ENCODE measurements at regions of chr6 and their contacts with region 1.

Region 1: DNA sequence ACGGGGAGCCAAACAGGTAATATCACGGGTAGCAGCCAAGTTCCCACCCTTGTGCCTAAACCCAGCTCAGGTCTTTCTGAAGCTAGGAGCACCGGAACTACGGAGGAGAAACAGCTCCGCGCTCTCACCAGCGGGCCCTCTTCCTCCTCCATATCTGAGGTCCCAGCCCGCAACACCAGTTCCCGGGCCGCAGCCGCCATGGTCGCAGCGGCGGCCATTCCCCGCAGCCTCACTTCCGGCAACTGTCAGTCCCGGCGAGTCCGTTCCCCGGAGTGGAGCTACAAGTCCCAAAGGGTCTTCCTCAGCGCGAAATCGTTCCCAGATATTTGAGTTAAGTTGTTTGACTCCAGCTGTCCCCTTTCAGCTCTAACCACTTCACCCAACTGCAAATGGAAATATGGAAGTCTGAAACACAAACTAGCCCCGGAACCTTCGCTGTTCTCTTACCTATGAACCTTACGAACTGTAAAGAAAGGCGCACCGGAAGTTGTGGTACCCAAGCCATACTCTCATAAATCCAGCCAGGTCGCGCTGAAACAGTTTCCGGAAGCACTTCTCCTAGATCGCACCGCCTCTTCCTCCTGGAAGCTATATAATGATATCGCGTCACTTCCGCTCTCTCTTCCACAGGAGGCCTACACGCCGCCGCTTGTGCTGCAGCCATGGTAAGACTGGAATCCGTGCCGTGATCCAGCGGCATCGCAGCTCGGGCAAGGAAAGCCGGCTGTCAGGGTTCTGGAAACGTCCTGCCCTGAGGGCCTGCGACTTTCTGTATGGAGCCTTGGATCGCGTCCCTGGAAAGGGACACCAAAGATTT is at the starts of genes RPS18 and VPS52:
- DNase-seq: peak; percentile 78 to 100 (median 94)
- ATAC-seq: peak; percentile 86 to 88
- H3K4me3 Mint-ChIP-seq: peak within 1 kb of the TSS; percentile 92 to 99 (median 96)
- H3K27ac Mint-ChIP-seq: peak within 1 kb of the TSS; percentile 99 to 100 (median 99)
- H3K4me1 Mint-ChIP-seq: peaks cover 34 to 71% (median 70%) of the 10 kb centered on the region in 4 donors
- H3K27me3 Mint-ChIP-seq: no peaks in the 10 kb centered on the region
- polyA plus RNA-seq, gene RPS18: 9,896 to 11,320 (median 11,293) TPM
- polyA plus RNA-seq, gene VPS52: 9.3 to 19.3 (median 15.2) TPM

Region 2: DNA sequence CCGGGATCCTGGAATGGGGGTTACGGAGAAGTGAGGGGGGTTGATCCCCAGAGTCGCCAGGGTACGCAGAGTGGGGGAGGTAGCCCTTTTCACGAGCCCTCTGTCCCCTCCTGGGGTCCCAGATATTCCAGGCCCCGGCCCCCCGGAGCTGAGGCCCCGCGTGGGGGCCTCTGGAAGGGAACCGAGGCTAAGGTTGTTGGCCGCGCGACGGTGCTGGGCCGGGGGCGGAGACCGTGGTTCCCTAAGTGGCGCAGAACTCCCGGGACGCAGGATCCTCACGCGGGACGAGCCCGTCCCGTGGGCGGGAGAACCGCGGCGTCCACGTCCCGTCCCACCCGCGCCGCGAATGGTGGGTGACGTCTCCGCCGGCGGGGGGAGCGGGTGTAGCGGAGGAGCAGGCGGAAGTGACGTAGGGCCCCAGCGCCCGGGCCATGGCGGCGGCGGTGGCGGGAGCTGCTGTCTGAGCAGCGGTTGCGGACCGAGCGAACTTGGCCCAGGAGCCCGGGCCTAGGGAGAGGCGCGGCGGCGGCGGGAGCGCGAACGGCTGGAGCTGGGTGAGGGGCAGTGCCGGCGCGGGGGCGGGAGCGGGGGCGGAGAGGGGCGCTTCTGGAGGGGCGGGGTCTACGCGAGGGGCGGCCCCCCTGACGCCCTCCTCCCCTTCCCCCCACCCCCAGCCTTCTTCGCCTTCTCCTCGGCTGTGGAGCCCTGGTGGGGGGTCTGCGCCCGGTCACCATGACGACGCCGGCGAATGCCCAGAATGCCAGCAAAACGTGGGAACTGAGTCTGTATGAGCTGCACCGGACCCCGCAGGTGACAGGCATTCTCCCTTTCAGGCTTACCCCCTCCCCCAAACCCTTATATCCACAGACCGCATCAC is 63.3 kb before region 1 on chr6 and contains the start of gene RING1:
- POLR2A ChIA-PET with region 1: interaction called, 10 read pairs
- DNase-seq: peak; percentile 79 to 91 (median 87)
- ATAC-seq: peak; percentile 58 to 69
- H3K4me3 Mint-ChIP-seq: peak within 1 kb of the TSS; percentile 84 to 99 (median 94)
- H3K27ac Mint-ChIP-seq: peak within 1 kb of the TSS; percentile 88 to 98 (median 96)
- H3K4me1 Mint-ChIP-seq: peaks cover 38 to 66% (median 61%) of the 10 kb centered on the region in 4 donors
- H3K27me3 Mint-ChIP-seq: peaks cover 0 to 3% (median 0%) of the 10 kb centered on the region in 5 donors
- polyA plus RNA-seq, gene RING1: 12.1 to 12.5 (median 12.4) TPM

Region 3: GRCh38 chr6:33288921-33289748 is 17.5 kb after region 1 on chr6 and contains the starts of genes PFDN6 and WDR46:
- POLR2A ChIA-PET with region 1: interaction called, 128 read pairs
- DNase-seq: peak; percentile 53 to 91 (median 81)
- ATAC-seq: peak; percentile 96 to 97
- H3K4me3 Mint-ChIP-seq: peak within 1 kb of the TSS; percentile 87 to 100 (median 99)
- H3K27ac Mint-ChIP-seq: peak within 1 kb of the TSS; percentile 84 to 97 (median 94)
- H3K4me1 Mint-ChIP-seq: peaks cover 22 to 51% (median 48%) of the 10 kb centered on the region in 4 donors
- H3K27me3 Mint-ChIP-seq: no peaks in the 10 kb centered on the region
- polyA plus RNA-seq, gene PFDN6: 33.4 to 38.2 (median 35.5) TPM
- polyA plus RNA-seq, gene WDR46: 71.3 to 83.7 (median 74.1) TPM

Region 4: GRCh38 chr6:33299237-33299944 is 27.7 kb after region 1 on chr6:
- POLR2A ChIA-PET with region 1: interaction called, 106 read pairs
- DNase-seq: peak; percentile 86 to 95 (median 92)
- ATAC-seq: peak; percentile 82 to 88
- H3K4me3 Mint-ChIP-seq: peak overlapping the region; percentile 94 to 100 (median 98)
- H3K27ac Mint-ChIP-seq: peak overlapping the region; percentile 94 to 100 (median 99)
- H3K4me1 Mint-ChIP-seq: peaks cover 20 to 49% (median 43%) of the 10 kb centered on the region in 4 donors
- H3K27me3 Mint-ChIP-seq: peaks cover 0 to 2% (median 0%) of the 10 kb centered on the region in 5 donors

Region 5: GRCh38 chr6:33317669-33318425 is 46.2 kb after region 1 on chr6 and contains the start of gene ZBTB22:
- POLR2A ChIA-PET with region 1: interaction called, 30 read pairs
- DNase-seq: peak; percentile 89 to 98 (median 94)
- ATAC-seq: peak; percentile 59 to 62
- H3K4me3 Mint-ChIP-seq: peak within 1 kb of the TSS in 9 of 10 donors; percentile 96 to 100 (median 99)
- H3K27ac Mint-ChIP-seq: peak within 1 kb of the TSS; percentile 95 to 100 (median 98)
- H3K4me1 Mint-ChIP-seq: peaks cover 36 to 87% (median 79%) of the 10 kb centered on the region in 4 donors
- H3K27me3 Mint-ChIP-seq: no peaks in the 10 kb centered on the region
- polyA plus RNA-seq, gene ZBTB22: 10.4 to 13.4 (median 10.7) TPM

Region 6: DNA sequence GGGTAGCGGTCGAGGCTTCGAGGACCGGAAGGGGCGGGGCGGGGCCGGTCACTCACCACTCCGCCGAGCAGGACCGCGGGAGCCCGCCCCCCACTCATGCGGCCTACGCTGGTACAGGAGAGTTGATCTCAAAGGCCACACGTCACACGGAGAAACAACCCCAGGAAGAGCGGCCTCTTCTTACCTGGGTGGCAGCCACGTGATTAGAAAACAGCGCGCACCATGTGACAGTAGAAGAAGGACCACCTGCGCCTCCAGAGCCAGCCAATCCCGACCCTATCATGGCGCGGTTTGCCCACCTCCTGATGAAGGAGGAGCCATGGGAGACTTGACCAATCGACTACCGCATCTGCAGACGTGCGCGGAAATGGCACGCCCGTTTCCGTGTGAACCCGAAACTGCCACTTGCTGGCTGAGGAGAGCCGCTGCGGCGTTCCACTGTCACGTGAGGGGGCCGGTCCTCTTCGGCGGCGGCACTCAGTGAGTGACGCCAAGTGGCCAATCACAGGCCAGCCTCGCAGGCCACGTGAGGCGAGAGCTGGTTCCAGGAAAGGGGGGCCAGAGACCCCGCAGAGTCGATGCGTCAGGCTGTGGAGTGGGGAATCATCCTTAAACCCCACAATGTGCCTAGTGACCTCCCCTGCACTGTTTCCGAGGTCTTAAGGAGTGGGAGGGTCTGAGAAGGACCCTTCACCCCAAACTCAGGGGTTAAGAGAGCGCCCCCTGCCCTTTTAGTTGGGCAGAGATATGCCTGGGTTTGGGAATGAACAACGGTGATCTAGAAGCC is 146.4 kb after region 1 on chr6 and contains the start of gene CUTA:
- POLR2A ChIA-PET with region 1: interaction called, 16 read pairs
- DNase-seq: peak; percentile 93 to 100 (median 99)
- ATAC-seq: peak; percentile 90
- H3K4me3 Mint-ChIP-seq: peak within 1 kb of the TSS; percentile 90 to 95 (median 92)
- H3K27ac Mint-ChIP-seq: peak within 1 kb of the TSS; percentile 98 to 100 (median 99)
- H3K4me1 Mint-ChIP-seq: peaks cover 49 to 94% (median 80%) of the 10 kb centered on the region in 4 donors
- H3K27me3 Mint-ChIP-seq: no peaks in the 10 kb centered on the region
- polyA plus RNA-seq, gene CUTA: 338 to 441 (median 385) TPM

Region 7: DNA sequence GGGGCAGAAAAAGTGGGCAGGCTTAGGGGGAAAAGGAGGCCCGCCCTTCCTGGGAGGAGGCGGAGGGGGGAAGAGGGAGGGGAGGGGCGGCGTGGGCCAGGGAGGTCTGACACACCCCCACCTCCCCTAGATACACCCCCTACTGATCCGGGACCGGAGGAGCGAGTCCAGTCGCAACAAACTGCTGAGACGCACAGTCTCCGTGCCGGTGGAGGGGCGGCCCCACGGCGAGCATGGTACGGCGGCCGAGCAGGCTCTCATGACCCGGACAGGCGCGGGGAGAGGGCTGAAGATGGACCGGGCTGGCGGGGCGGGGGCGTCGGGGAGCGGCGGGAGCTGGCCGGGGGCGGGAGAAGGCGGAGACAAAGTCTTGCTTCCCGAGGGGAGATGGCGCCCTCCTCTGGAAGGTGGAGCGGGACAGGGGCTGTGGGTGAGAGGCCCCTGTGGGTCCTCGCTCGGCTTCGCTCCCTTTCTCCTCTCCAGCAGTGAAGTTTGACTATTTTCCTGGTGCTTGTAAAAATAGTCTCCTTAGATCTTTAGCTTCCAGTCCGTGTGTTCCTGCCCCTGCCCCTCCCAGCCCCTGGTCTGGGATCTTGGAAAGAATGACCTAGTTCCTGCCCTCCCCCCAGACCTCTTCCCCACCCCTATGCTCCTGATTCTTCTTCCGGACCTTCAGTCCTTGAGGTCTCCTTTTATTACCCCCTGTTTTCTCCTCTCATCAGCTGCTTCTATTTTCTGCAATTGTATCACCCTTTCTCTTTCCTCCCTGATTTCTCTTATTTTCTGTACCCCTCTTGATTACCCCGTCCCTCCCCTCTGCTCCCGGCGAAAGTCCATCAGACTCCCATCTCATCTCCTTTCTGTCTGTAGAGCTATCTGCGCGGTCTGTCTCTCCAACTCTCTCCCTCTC is 154.3 kb after region 1 on chr6:
- POLR2A ChIA-PET with region 1: interaction called, 13 read pairs
- DNase-seq: peak; percentile 70 to 94 (median 80)
- ATAC-seq: peak; percentile 54 to 57
- H3K4me3 Mint-ChIP-seq: peak overlapping the region; percentile 87 to 97 (median 91)
- H3K27ac Mint-ChIP-seq: peak overlapping the region; percentile 93 to 99 (median 99)
- H3K4me1 Mint-ChIP-seq: peaks cover 61 to 90% (median 79%) of the 10 kb centered on the region in 4 donors
- H3K27me3 Mint-ChIP-seq: no peaks in the 10 kb centered on the region

Region 8: GRCh38 chr6:33654831-33655554 is 383.3 kb after region 1 on chr6:
- POLR2A ChIA-PET with region 1: no interaction called
- DNase-seq: no peak
- ATAC-seq: no peak
- H3K4me3 Mint-ChIP-seq: no peak overlapping the region
- H3K27ac Mint-ChIP-seq: peak overlapping the region in 2 of 10 donors; percentile 35 to 71
- H3K4me1 Mint-ChIP-seq: peaks cover 3 to 6% (median 4%) of the 10 kb centered on the region in 4 donors
- H3K27me3 Mint-ChIP-seq: no peaks in the 10 kb centered on the region

Region 9: GRCh38 chr6:33683051-33683571 is 411.4 kb after region 1 on chr6:
- POLR2A ChIA-PET with region 1: no interaction called
- DNase-seq: peak in 3 of 10 donors; percentile 14 to 25 (median 24)
- ATAC-seq: peak in 1 of 2 donors; percentile 38
- H3K4me3 Mint-ChIP-seq: peak overlapping the region in 3 of 10 donors; percentile 22 to 51 (median 35)
- H3K27ac Mint-ChIP-seq: peak overlapping the region in 4 of 10 donors; percentile 37 to 63 (median 49)
- H3K4me1 Mint-ChIP-seq: peaks cover 0 to 14% (median 12%) of the 10 kb centered on the region in 4 donors
- H3K27me3 Mint-ChIP-seq: no peaks in the 10 kb centered on the region

Measured in naive thymus-derived CD8-positive, alpha-beta T cell (primary cell).